AG04449 (cell line): ENCODE measurements at regions of chr19 and their contacts with region 1.

Region 1: GRCh38 chr19:6125571-6125989 is 9.9 kb upstream of the ACSBG2 start:
- DNase-seq: no peak
- H3K4me3 ChIP-seq: no peak overlapping the region
- CTCF ChIP-seq: peak; percentile 89

Region 2: GRCh38 chr19:6056801-6057650 is 68.6 kb before region 1 on chr19:
- CTCF ChIA-PET with region 1: interaction called, 189 read pairs
- POLR2A ChIA-PET with region 1: no interaction called
- DNase-seq: peak; percentile 53
- H3K4me3 ChIP-seq: no peak overlapping the region
- CTCF ChIP-seq: no peak

Region 3: GRCh38 chr19:6087074-6087571 is 38.5 kb before region 1 on chr19:
- CTCF ChIA-PET with region 1: no interaction called
- POLR2A ChIA-PET with region 1: no interaction called
- DNase-seq: no peak
- H3K4me3 ChIP-seq: no peak overlapping the region
- CTCF ChIP-seq: no peak

Region 4: DNA sequence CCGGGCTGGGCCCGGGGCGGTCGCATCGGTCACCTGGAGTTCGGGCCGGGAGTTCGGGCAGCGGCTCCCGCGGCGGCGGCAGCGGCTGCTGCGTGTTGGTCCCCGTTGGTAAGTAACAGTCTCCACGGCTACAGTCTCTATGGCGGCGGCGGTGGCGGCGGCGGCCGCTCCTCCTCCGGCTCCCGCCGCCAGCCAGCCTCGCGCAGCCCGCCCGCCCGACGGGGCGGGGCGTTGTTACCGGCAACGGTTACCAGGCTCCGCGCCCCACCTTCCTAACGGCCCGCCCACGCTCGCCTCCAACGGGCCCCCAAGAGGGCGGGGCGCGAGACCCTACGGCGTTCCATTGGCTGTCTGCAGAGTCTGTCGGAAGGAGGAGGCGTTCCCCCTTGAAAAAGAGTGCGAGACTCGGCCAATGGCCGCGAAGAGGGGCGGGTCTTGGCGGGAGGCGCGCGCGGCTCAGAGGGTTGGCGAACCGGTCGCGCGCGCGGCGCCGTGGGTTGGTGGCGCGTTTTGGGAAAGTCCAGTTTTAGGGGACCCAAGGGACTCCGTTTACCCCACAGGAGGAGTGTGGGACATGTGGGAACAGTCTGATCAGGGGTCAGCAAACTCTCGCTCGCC is 15.1 kb before region 1 on chr19 and contains the start of gene RFX2:
- CTCF ChIA-PET with region 1: interaction called, 78 read pairs
- POLR2A ChIA-PET with region 1: no interaction called
- DNase-seq: peak; percentile 85
- H3K4me3 ChIP-seq: peak within 1 kb of the TSS; percentile 66
- CTCF ChIP-seq: no peak

Region 5: DNA sequence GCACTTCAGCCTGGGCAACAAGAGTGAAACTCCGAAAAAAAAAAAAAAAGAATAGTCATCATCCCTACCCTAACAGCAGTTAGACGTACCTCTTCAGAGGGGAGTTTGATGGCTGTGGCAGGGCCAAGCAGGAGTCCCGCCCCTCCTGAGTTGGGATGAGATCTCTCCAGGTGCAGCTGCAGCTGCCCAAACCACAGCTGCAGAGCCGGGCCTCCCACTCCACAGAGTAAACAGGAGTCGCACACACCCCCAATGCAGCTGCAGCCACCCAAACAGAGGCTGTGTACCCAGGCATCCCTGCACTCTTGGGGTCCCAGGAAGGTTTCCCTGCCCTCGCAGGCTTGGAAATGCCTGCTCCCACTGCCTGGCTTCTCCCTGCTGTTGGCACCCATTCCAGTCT is 171.6 kb after region 1 on chr19:
- CTCF ChIA-PET with region 1: interaction called, 15 read pairs
- POLR2A ChIA-PET with region 1: no interaction called
- DNase-seq: no peak
- H3K4me3 ChIP-seq: no peak overlapping the region
- CTCF ChIP-seq: no peak

Region 6: GRCh38 chr19:6862673-6863078 is 737.1 kb after region 1 on chr19:
- CTCF ChIA-PET with region 1: interaction called, 16 read pairs
- POLR2A ChIA-PET with region 1: no interaction called
- DNase-seq: peak; percentile 9
- H3K4me3 ChIP-seq: peak overlapping the region; percentile 40
- CTCF ChIP-seq: peak; percentile 86